ENCODE measurements at regions of chr6 and their contacts with region 1.

Region 1: GRCh38 chr6:80338201-80338836 is 231.8 kb downstream of the BCKDHB start:
- DNase-seq: peak; percentile 54
- ATAC-seq: peak; percentile 50; the same call in 1 of the 2 replicates
- H3K4me3 ChIP-seq: no peak overlapping the region
- H3K27ac ChIP-seq: no peak overlapping the region
- H3K4me1 ChIP-seq: no peaks in the 10 kb centered on the region
- H3K27me3 ChIP-seq: no peaks in the 10 kb centered on the region
- CTCF ChIP-seq: peak; percentile 57
- POLR2A ChIP-seq: no peak
- RAD21 ChIP-seq: peak; percentile 63

Region 2: DNA sequence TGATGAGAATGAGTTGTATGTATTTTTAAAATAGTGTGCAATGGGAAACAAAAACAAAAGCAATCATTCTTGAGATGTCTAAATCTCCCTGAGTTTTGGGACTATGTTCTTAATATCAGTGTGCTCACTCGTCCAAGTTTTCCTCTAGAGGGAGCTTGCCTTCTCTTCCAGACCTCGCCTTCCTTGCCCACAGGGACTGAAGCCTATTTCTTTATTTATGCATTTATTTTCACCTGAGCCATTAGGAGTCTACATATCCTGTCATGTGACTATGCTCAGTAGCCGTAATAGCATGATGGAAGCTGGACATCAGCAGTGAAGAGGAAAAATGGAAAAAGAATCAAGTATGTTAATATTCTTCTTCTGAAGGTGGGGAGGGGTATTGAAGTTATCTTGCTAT is 575.9 kb before region 1 on chr6:
- CTCF ChIA-PET with region 1: no interaction called
- POLR2A ChIA-PET with region 1: no interaction called
- dilution Hi-C with region 1: no loop called
- in situ Hi-C with region 1: no loop called
- intact Hi-C with region 1: no loop called
- DNase-seq: no peak
- ATAC-seq: no peak
- H3K4me3 ChIP-seq: no peak overlapping the region
- H3K27ac ChIP-seq: no peak overlapping the region
- H3K4me1 ChIP-seq: no peaks in the 10 kb centered on the region
- H3K27me3 ChIP-seq: no peaks in the 10 kb centered on the region; the same call in 1 of the 2 replicates
- CTCF ChIP-seq: 0 out of 2 replicates have a peak, but pooled peaks have one; percentile 8
- POLR2A ChIP-seq: no peak
- RAD21 ChIP-seq: no peak

Region 3: DNA sequence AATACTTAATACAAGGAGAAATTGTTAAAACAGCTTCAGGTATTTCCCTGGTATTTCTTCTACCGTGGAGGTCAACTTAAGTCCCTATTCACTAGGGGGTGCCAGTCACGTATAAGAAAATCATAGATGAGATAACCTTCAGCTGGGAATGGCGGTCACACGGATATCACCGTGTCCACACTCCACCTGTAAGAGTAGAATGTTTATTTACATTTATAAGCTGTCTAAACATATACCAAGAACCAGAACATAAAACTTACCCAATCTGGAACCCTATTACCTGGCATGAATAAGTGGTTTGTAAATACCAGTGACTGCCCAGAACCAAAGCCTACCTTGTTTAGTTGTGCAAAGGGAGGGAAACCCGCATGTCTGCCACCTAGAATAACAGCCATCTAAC is 389.1 kb before region 1 on chr6:
- CTCF ChIA-PET with region 1: no interaction called
- POLR2A ChIA-PET with region 1: no interaction called
- dilution Hi-C with region 1: no loop called
- in situ Hi-C with region 1: no loop called
- intact Hi-C with region 1: loop called (anchors 5 kb)
- DNase-seq: peak; percentile 75
- ATAC-seq: no peak
- H3K4me3 ChIP-seq: no peak overlapping the region
- H3K27ac ChIP-seq: no peak overlapping the region
- H3K4me1 ChIP-seq: no peaks in the 10 kb centered on the region; the same call in 1 of the 2 replicates
- H3K27me3 ChIP-seq: no peaks in the 10 kb centered on the region
- CTCF ChIP-seq: peak; percentile 64
- POLR2A ChIP-seq: no peak
- RAD21 ChIP-seq: peak; percentile 56

Region 4: DNA sequence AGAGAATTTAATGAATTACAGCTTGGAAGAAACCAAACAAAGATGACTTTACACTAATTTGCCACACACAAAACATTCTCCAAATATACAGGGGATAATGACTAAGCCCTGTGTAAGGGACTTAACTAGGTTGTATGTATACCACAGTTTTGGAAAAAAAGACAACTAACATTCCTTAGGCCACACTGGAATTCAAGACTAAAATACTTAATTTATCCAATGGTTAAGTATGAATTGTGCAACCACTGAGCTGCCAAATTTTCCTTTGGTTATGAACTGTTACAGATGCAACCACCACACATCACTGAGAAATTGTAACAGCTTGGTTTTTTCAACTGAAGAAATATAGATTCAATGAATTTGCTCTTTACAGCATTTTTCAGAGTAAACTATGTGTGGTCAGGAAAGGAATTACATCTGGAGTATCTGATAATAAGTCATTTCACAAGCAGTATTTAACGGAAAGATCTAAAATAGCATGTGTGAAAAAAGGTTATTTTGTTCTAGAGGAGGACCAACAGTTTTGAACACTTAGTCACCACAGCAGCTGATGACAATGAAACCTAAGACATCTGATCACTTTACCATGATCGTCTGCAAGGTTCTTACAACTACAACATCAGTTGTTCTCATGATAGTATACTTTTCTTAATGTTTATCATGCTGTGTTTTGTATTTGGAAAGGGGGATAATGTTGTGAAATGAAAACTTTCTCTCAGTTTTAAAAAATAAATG is 86.9 kb after region 1 on chr6:
- CTCF ChIA-PET with region 1: no interaction called
- POLR2A ChIA-PET with region 1: no interaction called
- dilution Hi-C with region 1: no loop called
- in situ Hi-C with region 1: no loop called
- intact Hi-C with region 1: loop called (anchors 5 kb)
- DNase-seq: peak; percentile 99
- ATAC-seq: peak; percentile 98
- H3K4me3 ChIP-seq: no peak overlapping the region
- H3K27ac ChIP-seq: peak overlapping the region; percentile 90; the same call in 1 of the 2 replicates
- H3K4me1 ChIP-seq: peaks cover 7% of the 10 kb centered on the region
- H3K27me3 ChIP-seq: no peaks in the 10 kb centered on the region
- CTCF ChIP-seq: peak; percentile 24; the same call in 1 of the 2 replicates
- POLR2A ChIP-seq: no peak
- RAD21 ChIP-seq: peak; percentile 16; the same call in 1 of the 2 replicates

Region 5: DNA sequence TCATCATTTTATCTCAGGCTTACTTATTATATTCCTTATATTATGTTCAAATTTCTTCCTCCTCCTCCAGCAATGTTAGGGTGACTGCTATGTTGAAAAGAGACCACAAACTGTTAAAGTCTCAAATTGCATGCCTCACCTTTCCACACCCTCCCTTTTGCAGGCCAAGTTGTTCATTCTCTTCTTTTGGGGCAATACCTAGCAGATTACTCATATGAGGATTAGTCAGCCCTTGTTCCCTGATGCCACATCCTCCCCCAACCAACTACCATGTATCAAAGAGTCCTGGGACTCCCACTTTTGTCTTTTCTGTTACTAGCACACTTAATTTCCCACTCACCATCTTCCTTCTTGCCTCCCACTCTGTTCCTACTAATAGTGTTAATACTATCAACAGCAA is 202.9 kb after region 1 on chr6:
- CTCF ChIA-PET with region 1: no interaction called
- POLR2A ChIA-PET with region 1: no interaction called
- dilution Hi-C with region 1: no loop called
- in situ Hi-C with region 1: no loop called
- intact Hi-C with region 1: loop called (anchors 10 kb)
- DNase-seq: peak; percentile 85
- ATAC-seq: peak; percentile 12
- H3K4me3 ChIP-seq: no peak overlapping the region
- H3K27ac ChIP-seq: no peak overlapping the region
- H3K4me1 ChIP-seq: peaks cover 21% of the 10 kb centered on the region
- H3K27me3 ChIP-seq: no peaks in the 10 kb centered on the region
- CTCF ChIP-seq: no peak
- POLR2A ChIP-seq: no peak
- RAD21 ChIP-seq: 0 out of 2 replicates have a peak, but pooled peaks have one; percentile 4

Measured in IMR-90 (cell line).